ENCODE measurements at regions of chr3 and their contacts with region 1.

Region 1: DNA sequence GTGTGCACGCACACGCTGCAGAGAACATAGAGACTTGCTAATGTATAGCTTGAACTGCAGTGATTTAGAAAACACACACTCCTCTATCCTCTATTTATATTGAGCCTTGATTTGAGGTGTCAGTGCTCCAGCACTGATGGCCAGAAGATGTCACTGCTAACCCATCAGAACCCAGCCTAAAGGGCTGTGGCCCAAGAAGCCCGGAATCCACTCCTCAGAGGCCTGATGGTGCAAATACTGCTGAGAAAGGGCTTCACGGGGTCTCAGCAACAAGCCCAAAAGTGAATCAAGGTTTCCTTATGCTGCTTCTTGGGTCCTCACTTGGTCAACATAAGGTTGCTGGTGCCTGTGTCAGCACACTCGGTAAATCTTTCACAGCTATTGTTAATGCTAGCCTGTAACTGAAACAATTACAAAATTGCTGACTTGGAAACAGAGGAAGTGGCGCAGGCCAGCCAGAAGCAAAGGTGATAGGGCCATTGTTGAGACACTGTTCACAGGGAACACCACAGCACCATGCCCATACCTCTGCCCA is 60.3 kb downstream of the HEG1 start:
- DNase-seq: peak; percentile 27
- H3K4me3 ChIP-seq: no peak overlapping the region
- H3K27ac ChIP-seq: no peak overlapping the region
- H3K4me1 ChIP-seq: no peaks in the 10 kb centered on the region
- H3K27me3 ChIP-seq: no peaks in the 10 kb centered on the region
- CTCF ChIP-seq: peak; percentile 65 to 67

Region 2: GRCh38 chr3:124916837-124917409 is 78.6 kb before region 1 on chr3:
- CTCF ChIA-PET with region 1: no interaction called
- dilution Hi-C with region 1: no loop called
- in situ Hi-C with region 1: no loop called
- intact Hi-C with region 1: no loop called
- DNase-seq: no peak
- H3K4me3 ChIP-seq: no peak overlapping the region
- H3K27ac ChIP-seq: no peak overlapping the region
- H3K4me1 ChIP-seq: no peaks in the 10 kb centered on the region
- H3K27me3 ChIP-seq: no peaks in the 10 kb centered on the region
- CTCF ChIP-seq: no peak

Region 3: DNA sequence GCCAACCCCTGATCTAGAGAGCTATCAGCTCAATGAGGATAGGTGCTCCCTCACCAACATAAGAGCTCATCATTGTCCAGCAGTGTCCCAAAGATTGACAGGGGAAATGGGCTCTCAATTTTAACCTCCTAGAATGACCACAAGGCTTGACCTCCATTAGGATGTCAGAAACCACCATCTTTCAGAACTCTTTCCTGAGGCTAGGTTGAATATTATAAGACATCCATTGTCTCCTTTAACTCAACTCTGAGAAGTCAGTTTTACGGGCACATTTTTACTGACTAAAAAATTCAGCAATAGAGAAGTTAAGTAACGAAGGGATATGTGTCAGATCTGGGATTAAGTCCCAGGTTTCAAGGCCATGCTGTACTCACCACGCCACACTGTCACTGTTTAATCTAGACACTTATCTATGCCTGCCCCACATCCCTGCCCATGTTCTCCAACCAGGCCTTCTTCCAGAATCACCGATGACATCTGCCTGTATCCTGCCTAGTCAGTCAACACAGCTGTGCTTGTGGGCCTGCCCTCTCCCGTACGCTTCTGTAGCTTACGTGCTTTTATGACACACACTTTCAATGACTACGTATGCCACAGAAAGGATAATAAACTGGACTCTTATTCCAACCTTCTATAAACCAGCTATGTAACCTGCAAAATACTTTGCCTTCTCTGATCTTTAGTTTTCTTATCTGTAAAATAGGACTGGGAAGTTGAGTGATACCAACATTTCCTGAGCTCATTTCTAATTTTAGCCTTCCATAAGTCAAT is 43.8 kb before region 1 on chr3:
- CTCF ChIA-PET with region 1: no interaction called
- dilution Hi-C with region 1: no loop called
- in situ Hi-C with region 1: no loop called
- intact Hi-C with region 1: no loop called
- DNase-seq: peak; percentile 4
- H3K4me3 ChIP-seq: no peak overlapping the region
- H3K27ac ChIP-seq: no peak overlapping the region
- H3K4me1 ChIP-seq: no peaks in the 10 kb centered on the region
- H3K27me3 ChIP-seq: no peaks in the 10 kb centered on the region
- CTCF ChIP-seq: no peak

Region 4: DNA sequence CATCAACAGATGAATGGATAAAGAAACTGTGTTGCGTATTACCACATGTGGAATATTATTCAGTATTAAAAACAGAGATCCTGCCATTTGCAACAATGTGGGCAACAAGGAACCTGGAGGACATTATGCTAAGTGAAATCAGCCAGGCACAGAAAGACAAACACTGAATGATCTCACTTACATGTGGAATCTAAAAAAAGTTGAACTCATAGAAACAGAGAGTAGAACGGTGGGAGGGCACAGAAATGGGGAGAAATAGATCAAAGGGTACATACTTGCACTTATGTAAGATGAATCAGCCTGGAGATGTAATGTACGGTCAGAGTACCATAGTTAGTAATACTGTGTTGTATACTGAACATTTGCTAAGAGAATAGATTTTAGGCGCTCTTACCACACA is 31.1 kb before region 1 on chr3:
- CTCF ChIA-PET with region 1: no interaction called
- dilution Hi-C with region 1: no loop called
- in situ Hi-C with region 1: no loop called
- intact Hi-C with region 1: no loop called
- DNase-seq: no peak
- H3K4me3 ChIP-seq: no peak overlapping the region
- H3K27ac ChIP-seq: no peak overlapping the region
- H3K4me1 ChIP-seq: no peaks in the 10 kb centered on the region
- H3K27me3 ChIP-seq: no peaks in the 10 kb centered on the region
- CTCF ChIP-seq: no peak

Region 5: GRCh38 chr3:124976383-124976782 is 19.1 kb before region 1 on chr3:
- CTCF ChIA-PET with region 1: no interaction called
- dilution Hi-C with region 1: no loop called
- in situ Hi-C with region 1: no loop called
- intact Hi-C with region 1: no loop called
- DNase-seq: no peak
- H3K4me3 ChIP-seq: no peak overlapping the region
- H3K27ac ChIP-seq: no peak overlapping the region
- H3K4me1 ChIP-seq: no peaks in the 10 kb centered on the region
- H3K27me3 ChIP-seq: no peaks in the 10 kb centered on the region
- CTCF ChIP-seq: no peak

Region 6: GRCh38 chr3:125039131-125040100 is 43.9 kb after region 1 on chr3:
- CTCF ChIA-PET with region 1: no interaction called
- dilution Hi-C with region 1: loop called (anchors 5 kb)
- in situ Hi-C with region 1: no loop called
- intact Hi-C with region 1: no loop called
- DNase-seq: no peak
- H3K4me3 ChIP-seq: no peak overlapping the region
- H3K27ac ChIP-seq: no peak overlapping the region
- H3K4me1 ChIP-seq: peaks cover 19% of the 10 kb centered on the region
- H3K27me3 ChIP-seq: no peaks in the 10 kb centered on the region
- CTCF ChIP-seq: no peak

Region 7: DNA sequence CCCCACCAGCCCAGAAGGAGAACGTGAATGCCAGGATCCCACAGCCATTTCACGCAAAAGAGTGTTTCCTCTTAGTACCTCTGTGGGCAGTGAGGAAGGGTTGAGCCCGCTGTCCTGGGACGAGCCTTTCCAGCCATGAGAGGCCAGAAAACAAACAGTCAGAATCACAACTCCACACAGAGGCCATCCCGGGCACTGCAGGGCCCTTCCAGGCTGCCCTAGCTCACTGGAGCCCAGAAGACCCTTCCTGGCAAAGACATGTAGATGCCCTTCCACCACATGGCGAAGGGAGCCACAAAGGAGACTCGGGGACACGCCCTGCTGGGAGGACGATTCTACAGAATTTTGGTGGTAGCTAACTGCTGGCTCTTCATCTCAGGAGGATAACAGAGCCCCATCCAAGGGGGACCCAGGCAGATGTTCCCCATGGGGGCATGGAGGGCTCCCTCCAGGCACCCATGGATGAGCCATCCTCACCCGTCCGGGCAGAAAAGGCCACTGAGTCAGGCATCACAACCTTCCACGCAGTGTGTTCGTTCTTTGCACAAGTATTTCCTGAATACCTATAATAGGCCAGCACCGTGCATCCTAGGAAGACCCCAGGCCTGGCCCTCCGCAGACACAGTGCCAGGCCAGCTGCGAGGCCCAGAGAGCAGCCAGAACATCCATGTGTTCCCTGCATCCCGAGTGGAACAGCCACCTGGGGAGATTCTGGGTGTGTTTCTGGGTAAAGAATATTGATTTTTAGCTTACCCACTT is 169.8 kb after region 1 on chr3:
- CTCF ChIA-PET with region 1: no interaction called
- dilution Hi-C with region 1: no loop called
- in situ Hi-C with region 1: no loop called
- intact Hi-C with region 1: loop called (anchors 1 kb)
- DNase-seq: no peak
- H3K4me3 ChIP-seq: no peak overlapping the region
- H3K27ac ChIP-seq: no peak overlapping the region
- H3K4me1 ChIP-seq: no peaks in the 10 kb centered on the region
- H3K27me3 ChIP-seq: no peaks in the 10 kb centered on the region
- CTCF ChIP-seq: peak; percentile 30 to 55

Region 8: DNA sequence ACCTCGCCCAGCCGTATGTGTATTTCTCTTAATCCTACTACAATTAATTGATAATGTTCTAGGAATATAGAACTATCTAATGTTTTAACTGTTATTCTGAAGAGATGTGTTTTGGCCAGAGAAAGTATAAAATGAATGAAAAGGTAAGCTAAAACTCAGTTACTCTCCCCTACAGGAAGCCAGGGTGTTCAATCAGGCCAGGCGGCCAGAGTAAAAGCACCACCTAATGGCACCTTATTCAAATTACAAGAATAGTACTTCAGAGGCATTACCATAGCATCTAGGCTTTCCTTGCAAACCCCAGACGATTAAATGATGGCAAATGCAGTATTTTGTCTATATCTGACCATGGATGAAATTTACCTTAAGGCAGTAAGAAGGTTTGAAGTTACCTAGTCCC is 206.7 kb after region 1 on chr3:
- CTCF ChIA-PET with region 1: no interaction called
- dilution Hi-C with region 1: no loop called
- in situ Hi-C with region 1: no loop called
- intact Hi-C with region 1: loop called (anchors 1 kb)
- DNase-seq: no peak
- H3K4me3 ChIP-seq: no peak overlapping the region
- H3K27ac ChIP-seq: no peak overlapping the region
- H3K4me1 ChIP-seq: no peaks in the 10 kb centered on the region
- H3K27me3 ChIP-seq: no peaks in the 10 kb centered on the region
- CTCF ChIP-seq: peak; percentile 37 to 42